Endothelial cell of umbilical vein (primary cell): ENCODE measurements at regions of chr5 and their contacts with region 1.

Region 1: GRCh38 chr5:136080483-136081216 is 51.9 kb downstream of the TGFBI start:
- DNase-seq: peak; percentile 96
- H3K4me3 ChIP-seq: peak overlapping the region; percentile 55 to 84 (median 68)
- H3K27ac ChIP-seq: peak overlapping the region; percentile 60
- H3K4me1 ChIP-seq: peaks cover 13% of the 10 kb centered on the region
- H3K27me3 ChIP-seq: peaks cover 15 to 27% of the 10 kb centered on the region in 2 experiments
- CTCF ChIP-seq: no peak
- POLR2A ChIP-seq: peak; percentile 41

Region 2: DNA sequence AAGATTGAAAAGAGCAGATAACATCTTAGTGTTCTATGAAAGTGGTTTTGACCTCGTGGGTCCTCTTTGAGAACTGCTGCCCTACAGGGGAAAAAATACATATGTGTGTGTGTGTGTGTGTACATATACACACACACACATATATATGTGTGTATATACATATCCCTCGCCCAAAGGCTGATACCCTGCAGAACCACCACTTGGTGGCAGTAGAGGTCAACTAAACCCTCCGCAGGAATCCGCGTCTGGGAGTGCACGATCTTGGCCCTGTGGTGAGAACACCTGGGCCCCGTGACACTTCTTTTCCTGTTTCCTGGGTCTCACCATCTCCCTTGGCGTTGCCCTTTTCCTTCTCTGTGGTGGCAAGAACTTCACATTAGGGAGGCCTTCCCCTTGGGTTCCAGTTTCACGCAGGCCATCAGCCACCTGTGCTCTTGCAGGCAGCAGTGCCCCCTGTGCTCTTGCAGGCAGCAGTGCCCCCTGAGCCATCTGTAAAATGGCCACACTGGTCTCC is 193.2 kb before region 1 on chr5:
- CTCF ChIA-PET with region 1: interaction called, 52 read pairs
- POLR2A ChIA-PET with region 1: no interaction called
- dilution Hi-C with region 1: no loop called
- intact Hi-C with region 1: loop called (anchors 1 kb)
- DNase-seq: peak; percentile 61
- H3K4me3 ChIP-seq: no peak overlapping the region
- H3K27ac ChIP-seq: no peak overlapping the region
- H3K4me1 ChIP-seq: no peaks in the 10 kb centered on the region
- H3K27me3 ChIP-seq: peaks cover 0 to 3% of the 10 kb centered on the region in 2 experiments
- CTCF ChIP-seq: peak; percentile 71 to 76
- POLR2A ChIP-seq: no peak

Region 3: DNA sequence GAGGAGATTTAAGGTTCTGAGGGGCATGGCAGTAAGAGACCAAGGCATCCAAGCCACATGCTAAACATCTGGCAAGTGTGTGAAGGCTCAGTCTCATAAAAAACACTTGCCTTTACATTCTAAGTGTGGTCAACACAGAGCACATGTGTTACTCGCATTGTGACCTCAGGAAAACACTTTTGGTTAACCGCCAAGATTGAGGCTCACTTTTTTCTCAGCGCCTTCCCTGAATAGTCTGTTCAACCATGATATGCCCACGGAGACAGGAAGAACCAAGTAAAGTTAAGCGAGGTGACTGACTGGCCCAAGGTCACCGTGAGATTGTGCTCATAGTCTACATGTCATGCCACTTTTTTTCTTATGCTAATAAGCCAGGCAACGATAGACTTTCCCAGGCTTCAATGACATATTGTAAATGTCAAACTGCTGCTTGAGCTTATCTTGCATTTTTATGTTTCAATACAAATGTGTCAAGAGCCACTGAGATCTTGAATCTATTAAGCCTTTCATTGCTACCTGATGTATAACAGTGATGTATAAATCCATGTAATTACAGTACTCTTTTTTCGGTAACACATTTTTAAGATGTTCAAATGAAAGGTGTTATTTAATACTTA is 163.9 kb before region 1 on chr5:
- CTCF ChIA-PET with region 1: no interaction called
- POLR2A ChIA-PET with region 1: no interaction called
- dilution Hi-C with region 1: no loop called
- intact Hi-C with region 1: no loop called
- DNase-seq: no peak
- H3K4me3 ChIP-seq: no peak overlapping the region
- H3K27ac ChIP-seq: no peak overlapping the region
- H3K4me1 ChIP-seq: no peaks in the 10 kb centered on the region
- H3K27me3 ChIP-seq: peaks cover 8 to 37% of the 10 kb centered on the region in 2 experiments
- CTCF ChIP-seq: no peak
- POLR2A ChIP-seq: no peak

Region 4: DNA sequence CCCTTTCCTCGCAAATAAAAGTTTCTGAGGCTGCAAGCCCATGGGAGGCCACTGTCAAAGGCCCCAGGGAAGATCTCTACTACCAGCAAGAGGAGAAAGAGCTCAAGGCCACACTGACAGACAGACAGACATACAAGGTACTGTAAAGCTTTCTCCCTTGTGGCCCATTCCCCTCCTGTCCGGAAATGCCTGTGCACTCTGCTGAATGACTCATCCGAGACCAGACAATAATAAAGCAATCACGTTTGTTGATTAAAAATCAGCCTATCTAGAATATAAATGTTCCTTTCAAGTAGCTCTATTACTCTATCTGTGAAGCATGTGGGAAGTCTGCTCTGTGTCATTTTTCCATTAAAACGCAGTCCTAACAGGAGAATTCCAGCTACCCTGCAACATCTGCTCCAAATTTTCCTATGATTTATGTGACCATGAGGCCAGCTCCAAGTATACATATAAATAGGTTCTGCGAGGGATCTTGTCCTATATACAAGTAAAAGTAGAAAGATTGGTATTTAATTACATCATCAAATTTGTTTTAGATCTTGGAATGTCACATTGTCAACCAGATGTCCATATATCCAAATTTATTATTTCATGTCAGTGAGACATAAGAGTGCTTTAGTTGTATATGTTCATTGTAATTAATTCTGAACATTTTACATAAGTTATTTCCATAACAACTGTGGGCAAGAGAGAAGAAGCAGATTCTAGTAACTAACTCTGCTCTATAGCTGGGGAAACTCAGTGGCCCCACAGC is 86.6 kb before region 1 on chr5:
- CTCF ChIA-PET with region 1: interaction called, 12 read pairs
- POLR2A ChIA-PET with region 1: no interaction called
- dilution Hi-C with region 1: no loop called
- intact Hi-C with region 1: no loop called
- DNase-seq: peak; percentile 79
- H3K4me3 ChIP-seq: no peak overlapping the region
- H3K27ac ChIP-seq: peak overlapping the region; percentile 72
- H3K4me1 ChIP-seq: peaks cover 35% of the 10 kb centered on the region
- H3K27me3 ChIP-seq: no peaks in the 10 kb centered on the region
- CTCF ChIP-seq: no peak
- POLR2A ChIP-seq: no peak

Region 5: DNA sequence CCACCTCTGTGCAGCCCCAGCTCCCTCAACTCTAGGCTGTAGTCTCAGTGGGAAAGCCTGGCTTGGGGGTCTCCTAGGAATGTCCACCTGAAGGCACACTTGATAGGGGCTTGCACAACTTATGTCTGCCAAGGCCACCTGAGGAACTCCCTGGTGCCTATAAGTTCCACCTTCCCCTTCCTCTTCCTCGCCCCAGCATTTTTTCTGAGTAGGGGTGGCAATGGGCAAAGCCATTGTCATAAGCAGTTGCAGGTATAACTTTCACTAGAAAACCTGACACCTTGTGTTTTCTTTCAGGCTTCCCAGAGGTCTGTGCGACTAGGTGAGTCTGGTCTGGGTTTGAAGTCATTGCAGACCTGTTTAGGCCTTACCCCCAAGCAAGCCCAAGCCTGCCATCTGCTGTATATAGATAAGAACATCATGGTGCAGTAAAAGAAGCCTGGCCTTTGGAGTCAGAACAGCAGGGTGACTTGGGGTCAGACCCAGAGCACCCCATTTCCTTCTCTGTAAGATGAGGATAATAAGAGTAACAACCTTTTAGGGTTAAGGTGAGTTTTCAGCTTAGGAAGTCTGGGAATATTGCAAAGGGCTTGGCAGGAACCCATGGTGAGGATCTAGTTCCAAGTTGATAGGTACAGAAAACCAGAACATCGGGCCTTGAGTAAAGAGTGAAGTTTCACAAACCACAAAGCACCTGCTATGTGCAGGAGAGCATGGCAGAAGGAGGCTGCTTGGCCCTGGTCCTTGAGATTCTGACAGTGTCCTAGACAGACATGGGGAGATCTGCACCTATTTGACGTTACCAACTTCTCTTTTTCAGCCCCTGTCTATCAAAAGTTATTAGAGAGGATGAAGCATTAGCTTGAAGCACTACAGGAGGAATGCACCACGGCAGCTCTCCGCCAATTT is 18.0 kb before region 1 on chr5:
- CTCF ChIA-PET with region 1: interaction called, 7 read pairs
- POLR2A ChIA-PET with region 1: no interaction called
- dilution Hi-C with region 1: no loop called
- intact Hi-C with region 1: loop called (anchors 1 kb)
- DNase-seq: peak; percentile 40
- H3K4me3 ChIP-seq: no peak overlapping the region
- H3K27ac ChIP-seq: no peak overlapping the region
- H3K4me1 ChIP-seq: peaks cover 15% of the 10 kb centered on the region
- H3K27me3 ChIP-seq: no peaks in the 10 kb centered on the region
- CTCF ChIP-seq: peak; percentile 42 to 54
- POLR2A ChIP-seq: no peak

Region 6: DNA sequence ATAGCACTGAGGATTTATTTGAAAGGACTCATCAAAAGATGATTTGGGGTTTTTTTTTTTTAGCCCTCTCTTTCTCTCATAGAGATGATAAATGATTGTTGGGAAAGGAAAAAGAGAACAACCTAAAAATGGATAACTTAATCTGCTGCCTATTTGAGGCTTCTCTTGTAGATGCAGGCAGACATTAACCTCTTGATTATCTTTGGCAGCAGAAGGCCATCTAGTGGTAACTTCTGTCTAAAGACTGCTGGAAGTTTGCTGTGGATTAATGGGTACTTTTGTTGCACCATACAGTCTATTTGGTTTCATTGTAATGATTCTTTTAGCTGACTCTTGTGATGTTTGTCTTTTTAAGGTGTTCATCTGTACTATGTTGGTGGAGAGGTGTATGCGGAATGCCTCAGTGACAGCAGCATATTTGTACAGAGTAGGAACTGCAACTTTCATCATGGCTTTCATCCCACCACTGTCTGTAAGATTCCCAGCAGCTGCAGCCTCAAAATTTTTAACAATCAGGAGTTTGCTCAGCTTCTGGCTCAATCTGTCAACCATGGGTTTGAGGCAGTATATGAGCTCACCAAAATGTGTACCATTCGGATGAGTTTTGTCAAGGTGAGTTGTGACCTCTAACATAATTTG is 93.5 kb after region 1 on chr5:
- CTCF ChIA-PET with region 1: interaction called, 5 read pairs
- POLR2A ChIA-PET with region 1: no interaction called
- dilution Hi-C with region 1: no loop called
- intact Hi-C with region 1: loop called (anchors 2 kb)
- DNase-seq: peak; percentile 57
- H3K4me3 ChIP-seq: no peak overlapping the region
- H3K27ac ChIP-seq: no peak overlapping the region
- H3K4me1 ChIP-seq: no peaks in the 10 kb centered on the region
- H3K27me3 ChIP-seq: no peaks in the 10 kb centered on the region
- CTCF ChIP-seq: peak; percentile 38 to 54
- POLR2A ChIP-seq: no peak